ENCODE measurements at regions of chr14 and their contacts with region 1.

Region 1: DNA sequence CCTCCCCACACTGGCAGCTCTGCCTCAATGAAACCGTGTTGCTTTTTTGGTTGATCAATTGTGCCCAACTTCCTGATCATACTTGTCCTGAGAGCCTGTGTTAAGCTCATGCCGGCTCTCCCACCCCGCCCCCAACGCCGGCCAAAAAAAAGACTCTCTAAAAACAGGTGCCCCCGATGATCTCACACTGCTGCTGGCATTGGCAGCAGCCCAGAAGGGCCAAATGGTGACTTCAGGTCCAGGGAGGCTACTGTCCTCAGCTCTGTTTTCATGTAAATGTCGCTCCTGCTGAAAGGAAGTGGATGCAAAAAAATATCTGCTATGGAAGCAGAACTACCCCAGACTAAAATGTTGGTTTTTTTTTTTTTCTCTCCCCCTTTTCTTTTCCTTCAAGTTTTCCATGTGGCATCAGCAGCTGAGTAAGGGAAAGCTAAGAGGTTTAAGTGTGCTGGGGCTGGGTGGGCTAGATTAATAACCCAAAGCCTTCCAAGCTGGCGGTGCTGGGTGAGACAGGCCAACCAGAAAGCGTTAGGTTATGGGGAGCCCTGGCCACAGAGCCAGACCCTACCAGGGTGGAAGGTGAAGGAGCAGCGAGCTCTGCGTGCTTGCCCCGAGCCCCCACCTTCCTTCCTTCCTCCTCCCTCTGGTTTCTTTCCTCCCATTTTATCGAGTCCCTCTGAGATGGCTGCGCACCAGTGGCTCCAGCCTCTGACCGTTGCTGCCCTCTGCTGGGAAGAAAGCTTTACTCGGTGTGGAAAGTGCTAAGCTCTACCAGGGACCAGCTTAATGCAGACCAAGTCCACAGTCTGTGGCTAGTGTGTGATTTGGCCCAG is 396.1 kb downstream of the NRXN3 start:
- DNase-seq: peak; percentile 29 to 64 (median 55)
- H3K4me3 ChIP-seq: no peak overlapping the region
- H3K27ac ChIP-seq: no peak overlapping the region
- H3K4me1 ChIP-seq: no peaks in the 10 kb centered on the region
- H3K27me3 ChIP-seq: no peaks in the 10 kb centered on the region
- CTCF ChIP-seq: no peak
- EP300 ChIP-seq: no peak
- POLR2A ChIP-seq: no peak

Region 2: DNA sequence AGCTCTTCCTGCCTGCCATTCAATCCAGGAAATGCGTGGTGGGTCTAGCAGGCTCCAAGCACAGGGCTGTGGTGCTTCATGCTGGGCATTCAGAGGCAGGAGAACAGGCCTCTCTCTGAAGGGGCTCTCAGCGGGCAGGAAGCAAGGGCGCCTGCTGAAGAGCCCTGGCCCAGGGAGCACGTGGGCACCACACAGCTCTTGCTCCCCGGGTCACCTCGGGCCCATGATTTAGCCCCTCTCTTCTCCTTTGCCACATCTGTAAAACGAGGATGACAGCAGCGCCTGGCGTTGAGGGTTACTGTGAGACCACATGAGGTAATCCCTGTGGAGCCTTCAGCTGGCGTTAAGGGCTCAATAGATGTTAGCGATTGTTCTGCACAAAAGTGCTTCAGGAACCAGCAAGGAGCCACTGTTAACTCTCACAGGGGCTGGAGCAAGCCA is 912.2 kb before region 1 on chr14:
- intact Hi-C with region 1: loop called in 1 of 4 experiments (anchors 10 kb)
- DNase-seq: no peak
- H3K4me3 ChIP-seq: no peak overlapping the region
- H3K27ac ChIP-seq: no peak overlapping the region
- H3K4me1 ChIP-seq: no peaks in the 10 kb centered on the region
- H3K27me3 ChIP-seq: no peaks in the 10 kb centered on the region
- CTCF ChIP-seq: no peak
- EP300 ChIP-seq: no peak
- POLR2A ChIP-seq: no peak

Region 3: GRCh38 chr14:78598041-78598920 is 32.0 kb after region 1 on chr14:
- intact Hi-C with region 1: no loop called
- DNase-seq: peak in 4 of 5 donors; percentile 11 to 30 (median 16)
- H3K4me3 ChIP-seq: no peak overlapping the region
- H3K27ac ChIP-seq: no peak overlapping the region
- H3K4me1 ChIP-seq: no peaks in the 10 kb centered on the region
- H3K27me3 ChIP-seq: no peaks in the 10 kb centered on the region
- CTCF ChIP-seq: no peak
- EP300 ChIP-seq: no peak
- POLR2A ChIP-seq: no peak